Activated CD4-positive, alpha-beta T cell treated with anti-CD3 and anti-CD28 coated beads for 36 hours (primary cell): ENCODE measurements at regions of chr20 and their contacts with region 1.

Region 1: GRCh38 chr20:5001174-5002076 is at the start of gene SLC23A2:
- DNase-seq: peak; percentile 75
- ATAC-seq: peak; percentile 73
- H3K4me3 Mint-ChIP-seq: peak within 1 kb of the TSS; percentile 82
- H3K27ac Mint-ChIP-seq: peak within 1 kb of the TSS; percentile 83
- H3K4me1 Mint-ChIP-seq: peaks cover 29% of the 10 kb centered on the region
- H3K27me3 Mint-ChIP-seq: no peaks in the 10 kb centered on the region
- total RNA-seq, gene SLC23A2: 16.7 to 17.6 TPM

Region 2: DNA sequence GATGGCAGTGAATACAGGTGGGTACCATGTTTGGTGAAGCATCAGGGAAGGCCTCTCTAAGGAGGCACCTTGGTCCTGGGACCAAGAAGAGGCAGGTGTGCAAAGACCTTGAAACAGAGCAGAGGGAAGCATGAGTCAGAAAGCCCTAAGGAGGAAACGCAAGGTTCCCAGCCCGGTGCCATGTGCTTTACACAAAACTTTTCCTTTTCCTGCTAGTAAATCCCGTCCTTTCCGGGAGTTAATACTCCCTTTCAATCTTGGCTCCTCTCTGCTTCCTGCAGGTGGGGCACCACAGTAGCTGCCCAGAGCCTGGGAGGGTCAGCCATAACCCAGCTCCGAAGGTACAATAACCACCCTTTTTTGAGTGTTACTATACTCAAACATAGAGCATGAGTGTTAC is 19.3 kb after region 1 on chr20:
- CTCF ChIA-PET with region 1: no interaction called
- POLR2A ChIA-PET with region 1: no interaction called
- intact Hi-C with region 1: no loop called
- DNase-seq: no peak
- ATAC-seq: no peak
- H3K4me3 Mint-ChIP-seq: no peak overlapping the region
- H3K27ac Mint-ChIP-seq: no peak overlapping the region
- H3K4me1 Mint-ChIP-seq: no peaks in the 10 kb centered on the region
- H3K27me3 Mint-ChIP-seq: no peaks in the 10 kb centered on the region

Region 3: GRCh38 chr20:5078399-5078958 is 77.1 kb after region 1 on chr20:
- CTCF ChIA-PET with region 1: no interaction called
- POLR2A ChIA-PET with region 1: no interaction called
- intact Hi-C with region 1: loop called in 1 of 2 experiments (anchors 1 kb)
- DNase-seq: peak; percentile 90
- ATAC-seq: peak; percentile 95
- H3K4me3 Mint-ChIP-seq: peak overlapping the region; percentile 58
- H3K27ac Mint-ChIP-seq: peak overlapping the region; percentile 93
- H3K4me1 Mint-ChIP-seq: peaks cover 38% of the 10 kb centered on the region
- H3K27me3 Mint-ChIP-seq: no peaks in the 10 kb centered on the region

Region 4: DNA sequence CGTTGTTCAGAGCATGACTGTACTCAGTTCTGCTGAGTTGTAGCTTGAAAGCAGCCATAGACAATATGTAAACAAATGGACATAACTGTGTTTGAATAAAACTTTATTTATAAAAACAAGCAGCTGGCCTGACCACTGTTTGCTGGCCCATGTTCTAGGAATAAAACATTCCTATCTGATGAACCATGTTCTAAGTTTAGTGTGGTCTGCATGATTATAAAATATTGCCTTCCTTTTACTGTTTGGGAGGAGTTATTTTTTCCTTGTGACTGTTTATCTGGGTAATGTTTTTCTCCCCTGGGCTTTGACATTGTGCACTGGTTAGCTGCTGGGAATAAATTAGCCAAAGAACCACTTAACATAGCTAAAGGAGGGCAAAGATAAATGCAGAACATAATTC is 180.5 kb after region 1 on chr20:
- CTCF ChIA-PET with region 1: no interaction called
- POLR2A ChIA-PET with region 1: no interaction called
- intact Hi-C with region 1: no loop called
- DNase-seq: no peak
- ATAC-seq: no peak
- H3K4me3 Mint-ChIP-seq: no peak overlapping the region
- H3K27ac Mint-ChIP-seq: no peak overlapping the region
- H3K4me1 Mint-ChIP-seq: peaks cover 3% of the 10 kb centered on the region
- H3K27me3 Mint-ChIP-seq: no peaks in the 10 kb centered on the region